Colonic mucosa (tissue), 4 donors: ENCODE measurements at regions of chr12 and their contacts with region 1.

Region 1: GRCh38 chr12:92649511-92650227 is 53.1 kb upstream of the PLEKHG7 start:
- DNase-seq: peak; percentile 67
- H3K4me3 ChIP-seq: no peak overlapping the region
- H3K27ac ChIP-seq: no peak overlapping the region
- H3K4me1 ChIP-seq: no peaks in the 10 kb centered on the region
- H3K27me3 ChIP-seq: no peaks in the 10 kb centered on the region
- CTCF ChIP-seq: peak; percentile 67

Region 2: GRCh38 chr12:91361864-91362263 is 1287.8 kb before region 1 on chr12:
- intact Hi-C with region 1: loop called (anchors 5 kb)
- DNase-seq: no peak
- H3K4me3 ChIP-seq: no peak overlapping the region
- H3K27ac ChIP-seq: no peak overlapping the region
- H3K4me1 ChIP-seq: no peaks in the 10 kb centered on the region
- H3K27me3 ChIP-seq: no peaks in the 10 kb centered on the region
- CTCF ChIP-seq: peak; percentile 51

Region 3: DNA sequence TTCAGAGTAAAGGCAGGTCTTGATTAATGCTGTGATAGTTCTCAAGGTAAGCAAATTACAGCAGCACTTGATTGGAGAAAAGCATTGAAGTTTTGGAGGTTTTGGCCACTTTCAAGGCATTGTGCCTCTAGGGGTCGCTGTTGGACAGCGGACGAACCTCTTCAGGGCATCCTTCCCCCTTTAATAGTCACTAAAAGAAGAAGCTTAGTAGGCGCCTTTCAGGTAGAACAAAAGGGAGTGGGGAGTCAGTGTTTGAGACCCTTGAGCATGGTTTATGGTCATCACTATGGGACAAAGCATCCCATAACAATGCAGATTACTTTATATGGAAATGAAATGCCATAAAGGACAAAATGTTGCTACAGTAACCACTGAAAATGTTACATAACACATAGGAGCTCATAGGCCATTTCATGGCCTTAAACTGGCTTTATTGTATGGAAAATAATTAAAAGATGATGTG is 1267.6 kb before region 1 on chr12:
- intact Hi-C with region 1: loop called (anchors 5 kb)
- DNase-seq: peak; percentile 90
- H3K4me3 ChIP-seq: peak overlapping the region; percentile 0
- H3K27ac ChIP-seq: peak overlapping the region; percentile 41
- H3K4me1 ChIP-seq: no peaks in the 10 kb centered on the region
- H3K27me3 ChIP-seq: no peaks in the 10 kb centered on the region
- CTCF ChIP-seq: peak; percentile 76

Region 4: GRCh38 chr12:93060666-93061471 is 411.2 kb after region 1 on chr12:
- intact Hi-C with region 1: no loop called
- DNase-seq: no peak
- H3K4me3 ChIP-seq: no peak overlapping the region
- H3K27ac ChIP-seq: peak overlapping the region; percentile 20
- H3K4me1 ChIP-seq: no peaks in the 10 kb centered on the region
- H3K27me3 ChIP-seq: no peaks in the 10 kb centered on the region
- CTCF ChIP-seq: no peak